ENCODE measurements at regions of chr6 and their contacts with region 1.

Region 1: DNA sequence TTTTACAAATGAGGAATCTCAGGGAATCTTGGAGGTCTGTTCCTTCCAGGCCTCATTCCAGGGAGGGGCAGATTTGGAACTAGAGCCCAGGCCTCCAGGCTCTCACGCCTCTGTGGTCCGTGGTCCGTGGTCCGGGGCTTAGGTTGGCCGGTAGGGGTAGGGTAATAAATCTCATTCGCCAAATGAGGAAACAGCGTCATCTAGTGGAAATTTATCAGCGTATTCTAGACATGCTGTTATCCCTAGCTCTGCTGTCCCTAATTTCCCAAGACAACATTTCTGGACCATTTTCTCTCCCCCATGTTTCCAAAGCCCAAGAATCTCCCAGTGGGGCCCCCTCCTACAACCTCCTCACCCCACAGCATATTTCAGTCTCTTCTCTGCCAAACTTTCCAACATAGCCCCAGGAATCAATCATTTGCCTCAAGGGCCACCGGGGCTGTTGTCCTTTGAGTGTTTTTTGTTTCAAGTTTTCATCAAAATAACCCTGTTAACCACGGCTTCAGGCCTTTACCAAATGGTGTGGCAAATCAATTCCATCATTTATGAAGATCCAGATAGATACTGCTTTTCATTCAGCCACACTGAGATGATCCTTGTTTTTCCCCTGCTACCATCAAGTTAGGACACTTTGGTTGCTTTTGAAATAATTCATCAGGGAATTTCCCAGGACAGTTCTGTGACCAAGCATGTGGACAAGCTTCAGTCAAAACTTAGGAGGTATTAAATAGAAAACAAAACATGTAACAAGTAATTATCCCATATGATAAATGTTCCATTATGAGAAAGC is 126.8 kb downstream of the ALDH8A1 start:
- DNase-seq: peak; percentile 73 to 86 (median 78)
- ATAC-seq: peak; percentile 100
- H3K4me3 ChIP-seq: no peak overlapping the region
- H3K27ac ChIP-seq: no peak overlapping the region
- H3K4me1 ChIP-seq: no peaks in the 10 kb centered on the region
- H3K27me3 ChIP-seq: peaks cover 11% of the 10 kb centered on the region in 2 experiments
- CTCF ChIP-seq: peak; percentile 92 to 99 (median 98)
- EP300 ChIP-seq: no peak
- POLR2A ChIP-seq: no peak
- RAD21 ChIP-seq: peak; percentile 98

Region 2: DNA sequence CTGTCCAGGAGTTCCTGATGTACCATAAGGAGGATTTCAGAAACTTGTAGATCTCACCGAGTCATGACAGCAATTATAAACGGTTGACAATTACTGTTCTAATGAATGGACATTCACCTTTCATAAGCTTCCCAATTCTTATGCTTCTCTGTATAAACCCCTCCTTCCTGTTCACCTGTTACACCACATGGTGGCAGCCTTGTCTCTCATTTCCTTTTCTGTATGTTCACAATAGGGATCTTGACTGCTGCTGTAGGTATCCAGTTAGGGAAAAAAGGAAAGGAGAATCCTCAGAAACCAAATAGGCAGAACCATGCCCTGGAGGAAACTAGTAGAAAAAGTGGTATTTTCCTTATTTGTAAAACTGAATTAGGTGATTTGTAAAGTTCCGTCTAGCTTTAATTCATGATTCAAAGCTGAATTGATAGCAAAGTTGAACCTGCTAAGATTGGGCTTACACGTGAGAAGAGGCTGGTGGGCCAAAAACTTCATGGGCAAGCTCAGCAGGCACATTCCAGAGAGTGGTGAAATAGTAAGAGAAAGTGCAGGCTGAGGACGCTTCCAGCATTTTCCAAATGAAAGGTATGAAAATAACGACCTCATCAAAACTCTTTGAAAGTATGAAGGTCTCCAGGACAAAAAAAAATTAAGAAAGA is 899.0 kb before region 1 on chr6:
- CTCF ChIA-PET with region 1: no interaction called
- POLR2A ChIA-PET with region 1: no interaction called
- in situ Hi-C with region 1: no loop called
- intact Hi-C with region 1: loop called (anchors 10 kb)
- DNase-seq: peak; percentile 55 to 84 (median 65)
- ATAC-seq: peak; percentile 94
- H3K4me3 ChIP-seq: no peak overlapping the region
- H3K27ac ChIP-seq: no peak overlapping the region
- H3K4me1 ChIP-seq: no peaks in the 10 kb centered on the region
- H3K27me3 ChIP-seq: no peaks in the 10 kb centered on the region
- CTCF ChIP-seq: peak; percentile 77 to 95 (median 82)
- EP300 ChIP-seq: no peak
- POLR2A ChIP-seq: no peak
- RAD21 ChIP-seq: peak; percentile 99 to 100

Region 3: DNA sequence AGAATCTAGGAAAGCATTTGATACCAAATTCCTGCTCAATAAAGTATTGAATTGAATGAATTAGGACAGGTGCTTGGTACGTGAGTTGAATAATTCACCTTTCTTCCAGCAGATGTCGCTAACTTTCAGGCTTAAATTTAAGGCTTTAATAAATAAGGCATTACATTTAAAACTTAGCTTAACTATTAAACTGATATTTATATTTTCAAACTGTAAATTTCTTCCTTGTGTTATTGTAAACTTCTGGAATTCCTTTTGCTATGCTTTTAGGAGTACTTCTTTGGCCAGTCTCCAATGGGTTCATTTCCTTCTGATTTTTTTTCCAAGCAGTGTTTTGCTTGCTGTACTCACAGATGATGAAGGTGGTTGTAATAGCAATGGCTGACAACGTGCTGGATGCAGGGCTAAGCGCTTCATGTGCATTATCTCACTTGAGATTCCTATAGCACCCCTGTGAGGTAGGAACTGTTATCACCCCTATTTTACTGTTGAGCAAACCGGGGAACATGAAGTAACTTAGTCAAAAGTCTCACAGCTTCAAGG is 699.4 kb before region 1 on chr6:
- CTCF ChIA-PET with region 1: interaction called, 13 read pairs
- POLR2A ChIA-PET with region 1: no interaction called
- in situ Hi-C with region 1: no loop called
- intact Hi-C with region 1: no loop called
- DNase-seq: peak in 3 of 4 experiments; percentile 19 to 63 (median 25)
- ATAC-seq: peak; percentile 98
- H3K4me3 ChIP-seq: no peak overlapping the region
- H3K27ac ChIP-seq: no peak overlapping the region
- H3K4me1 ChIP-seq: no peaks in the 10 kb centered on the region
- H3K27me3 ChIP-seq: peaks cover 0 to 4% of the 10 kb centered on the region in 2 experiments; a peak in 1 of 5 replicates
- CTCF ChIP-seq: peak; percentile 28 to 74 (median 38); a peak in 4 of 6 replicates
- EP300 ChIP-seq: peak; percentile 51
- POLR2A ChIP-seq: no peak
- RAD21 ChIP-seq: peak; percentile 61 to 74

Region 4: GRCh38 chr6:134453870-134454510 is 369.1 kb before region 1 on chr6:
- CTCF ChIA-PET with region 1: no interaction called
- POLR2A ChIA-PET with region 1: no interaction called
- in situ Hi-C with region 1: no loop called
- intact Hi-C with region 1: loop called (anchors 10 kb)
- DNase-seq: no peak
- ATAC-seq: no peak
- H3K4me3 ChIP-seq: no peak overlapping the region
- H3K27ac ChIP-seq: no peak overlapping the region
- H3K4me1 ChIP-seq: no peaks in the 10 kb centered on the region; a peak in 1 of 5 replicates
- H3K27me3 ChIP-seq: no peaks in the 10 kb centered on the region
- CTCF ChIP-seq: no peak
- EP300 ChIP-seq: no peak
- POLR2A ChIP-seq: no peak
- RAD21 ChIP-seq: no peak

Region 5: DNA sequence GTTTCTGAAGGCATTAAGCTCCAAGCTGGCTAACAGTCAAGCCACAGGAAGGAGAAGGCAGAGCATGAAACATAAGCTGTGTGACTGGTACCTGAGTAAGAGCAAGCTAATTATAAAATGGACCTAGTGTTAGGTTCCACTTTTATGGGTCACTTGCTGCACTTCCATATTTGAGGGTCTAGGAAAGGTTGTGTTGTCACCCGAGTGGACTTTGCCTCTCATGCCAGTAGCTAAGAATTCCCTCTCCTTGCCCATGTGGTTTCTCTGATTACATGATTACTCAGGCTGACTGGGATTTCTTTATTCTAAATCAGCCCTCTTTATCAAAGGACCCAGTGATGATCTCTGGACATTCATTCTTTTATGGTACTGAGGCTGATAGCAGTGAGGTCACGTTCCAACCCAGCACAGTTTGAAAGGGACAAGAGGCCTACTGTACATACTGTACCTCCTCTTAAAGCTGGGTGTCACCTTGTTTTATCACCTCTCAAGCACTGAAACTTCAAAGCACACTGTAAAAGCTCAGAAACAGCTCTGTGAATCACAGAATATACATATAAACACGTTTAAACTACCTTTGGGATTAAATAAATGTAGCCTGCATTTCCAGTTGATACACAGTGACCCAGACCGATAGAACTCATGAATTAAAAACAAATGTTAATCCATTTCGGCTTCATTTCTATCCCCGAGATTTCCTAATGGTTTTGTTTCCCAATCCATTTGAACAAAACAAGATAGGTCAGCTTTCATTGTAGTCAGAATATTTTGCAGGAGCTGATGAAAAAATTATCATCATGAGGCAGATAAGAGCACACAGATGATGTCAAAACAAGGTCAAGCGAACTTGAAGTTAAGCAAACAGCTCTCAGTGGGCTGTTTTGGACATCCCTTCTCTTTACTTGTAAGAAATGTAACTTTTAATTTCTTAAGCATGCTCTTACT is 30.3 kb after region 1 on chr6:
- CTCF ChIA-PET with region 1: no interaction called
- POLR2A ChIA-PET with region 1: no interaction called
- in situ Hi-C with region 1: no loop called
- intact Hi-C with region 1: no loop called
- DNase-seq: no peak
- ATAC-seq: no peak
- H3K4me3 ChIP-seq: no peak overlapping the region
- H3K27ac ChIP-seq: no peak overlapping the region
- H3K4me1 ChIP-seq: no peaks in the 10 kb centered on the region
- H3K27me3 ChIP-seq: peaks cover 21 to 29% of the 10 kb centered on the region in 2 experiments
- CTCF ChIP-seq: no peak
- EP300 ChIP-seq: no peak
- POLR2A ChIP-seq: no peak
- RAD21 ChIP-seq: no peak

Region 6: DNA sequence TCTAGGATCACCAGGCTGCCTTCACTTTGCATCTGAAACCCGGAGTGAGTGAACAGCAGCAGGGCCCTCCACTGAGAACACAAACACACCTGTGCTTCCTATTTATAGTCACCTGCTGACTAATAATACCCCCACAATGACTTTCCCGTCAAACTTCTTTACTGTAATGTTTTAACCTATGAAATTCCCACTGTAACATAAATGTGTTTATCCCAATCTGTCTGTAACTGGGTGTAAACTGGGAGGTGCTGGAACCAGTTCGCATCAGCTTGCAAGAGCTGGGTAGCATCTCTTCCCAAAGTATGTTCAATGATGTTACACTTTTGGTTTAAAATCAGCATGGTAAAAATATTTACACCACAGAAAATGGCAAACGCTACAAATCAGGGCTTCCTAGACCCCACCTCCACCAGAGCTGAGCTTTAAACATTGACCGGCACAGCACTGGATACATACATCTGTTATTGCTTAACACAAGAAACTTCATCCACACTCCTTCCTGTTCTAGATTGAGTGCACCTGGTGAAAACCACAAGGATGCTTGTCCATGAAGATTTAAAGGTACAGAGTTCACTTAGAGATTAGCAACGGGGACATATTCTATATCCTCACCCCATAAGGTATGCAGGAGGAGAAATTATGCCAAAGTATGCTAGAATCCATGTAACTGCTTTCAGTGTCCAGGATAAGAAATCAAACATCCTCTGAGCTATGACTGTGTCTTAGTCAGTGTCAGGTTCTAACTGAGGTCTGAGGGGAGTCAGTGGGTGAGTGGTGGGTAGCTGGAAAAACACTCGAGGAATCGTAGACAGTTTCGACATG is 47.8 kb after region 1 on chr6:
- CTCF ChIA-PET with region 1: no interaction called
- POLR2A ChIA-PET with region 1: no interaction called
- in situ Hi-C with region 1: no loop called
- intact Hi-C with region 1: no loop called
- DNase-seq: no peak
- ATAC-seq: no peak; the same call in 2 of the 3 replicates
- H3K4me3 ChIP-seq: no peak overlapping the region
- H3K27ac ChIP-seq: no peak overlapping the region
- H3K4me1 ChIP-seq: no peaks in the 10 kb centered on the region; a peak in 1 of 5 replicates
- H3K27me3 ChIP-seq: peaks cover 6 to 14% of the 10 kb centered on the region in 2 experiments
- CTCF ChIP-seq: no peak
- EP300 ChIP-seq: no peak
- POLR2A ChIP-seq: no peak
- RAD21 ChIP-seq: no peak

Region 7: GRCh38 chr6:134882426-134883038 is 59.4 kb after region 1 on chr6:
- CTCF ChIA-PET with region 1: interaction called, 3 read pairs
- POLR2A ChIA-PET with region 1: interaction called, 3 read pairs
- in situ Hi-C with region 1: no loop called
- intact Hi-C with region 1: loop called (anchors 5 kb)
- DNase-seq: peak; percentile 35 to 62 (median 46)
- ATAC-seq: peak; percentile 87
- H3K4me3 ChIP-seq: no peak overlapping the region
- H3K27ac ChIP-seq: no peak overlapping the region
- H3K4me1 ChIP-seq: no peaks in the 10 kb centered on the region
- H3K27me3 ChIP-seq: no peaks in the 10 kb centered on the region; a peak in 5 of 5 replicates
- CTCF ChIP-seq: peak; percentile 79 to 89 (median 82)
- EP300 ChIP-seq: no peak
- POLR2A ChIP-seq: no peak
- RAD21 ChIP-seq: peak; percentile 77 to 87